A549 (cell line): ENCODE measurements at regions of chr16 and their contacts with region 1.

Region 1: GRCh38 chr16:14529010-14529669 is 100.9 kb downstream of the PARN start:
- DNase-seq: peak; percentile 73 to 97
- ATAC-seq: peak; percentile 79 to 92
- H3K4me3 ChIP-seq: no peak overlapping the region
- H3K27ac ChIP-seq: peak overlapping the region; percentile 91
- H3K4me1 ChIP-seq: peaks cover 70% of the 10 kb centered on the region
- CTCF ChIP-seq: peak; percentile 94
- EP300 ChIP-seq: peak; percentile 35 to 44; a peak in 2 of 5 replicates
- POLR2A ChIP-seq: peak; percentile 23; the same call in 1 of the 2 replicates
- RAD21 ChIP-seq: peak; percentile 99 to 100

Region 2: DNA sequence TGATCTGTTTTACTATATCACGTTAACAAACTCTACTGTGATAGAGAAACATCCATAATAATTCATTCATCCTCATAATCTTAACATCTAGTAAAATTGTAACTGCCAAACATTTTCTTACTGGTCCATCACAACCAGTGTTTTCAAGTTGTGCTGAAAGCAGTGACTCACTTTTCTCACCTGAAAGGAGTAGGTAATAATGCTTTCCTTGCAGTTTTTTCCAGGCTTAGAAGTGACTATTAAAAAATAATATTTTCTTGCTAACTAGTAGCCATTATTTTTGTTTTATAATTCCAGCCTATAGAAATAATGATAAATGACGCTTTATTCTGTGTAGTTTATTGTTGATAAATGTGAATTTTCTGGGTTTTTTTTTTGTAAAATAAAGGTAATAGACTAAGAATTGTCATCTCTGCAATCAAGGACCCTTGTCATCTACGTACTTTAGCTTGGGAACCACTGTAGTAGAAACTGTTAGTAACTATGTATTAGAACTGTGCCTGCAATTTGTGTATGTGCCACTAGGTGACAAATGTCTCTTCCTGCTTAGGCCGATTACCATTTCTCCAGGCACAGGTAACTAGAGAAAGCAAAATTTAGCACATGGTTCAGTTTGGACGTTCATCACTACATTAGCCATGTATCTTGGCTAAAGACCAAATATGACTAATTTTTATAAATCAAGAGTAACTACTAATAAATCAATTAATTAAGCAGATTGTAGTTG is 1018.6 kb before region 1 on chr16:
- CTCF ChIA-PET with region 1: no interaction called
- POLR2A ChIA-PET with region 1: no interaction called
- DNase-seq: no peak
- ATAC-seq: no peak
- H3K4me3 ChIP-seq: no peak overlapping the region
- H3K27ac ChIP-seq: no peak overlapping the region
- H3K4me1 ChIP-seq: no peaks in the 10 kb centered on the region
- CTCF ChIP-seq: no peak
- EP300 ChIP-seq: no peak
- POLR2A ChIP-seq: no peak
- RAD21 ChIP-seq: 0 out of 5 replicates have a peak, but pooled peaks of 1 of the 2 experiments have one; percentile 6

Region 3: GRCh38 chr16:14249291-14250032 is 279.7 kb before region 1 on chr16:
- CTCF ChIA-PET with region 1: interaction called, 29 read pairs
- POLR2A ChIA-PET with region 1: no interaction called
- DNase-seq: peak; percentile 36 to 46
- ATAC-seq: peak; percentile 60 to 61; a peak in 4 of 6 replicates
- H3K4me3 ChIP-seq: no peak overlapping the region
- H3K27ac ChIP-seq: peak overlapping the region; percentile 64 to 65
- H3K4me1 ChIP-seq: peaks cover 8% of the 10 kb centered on the region
- CTCF ChIP-seq: peak; percentile 97
- EP300 ChIP-seq: no peak
- POLR2A ChIP-seq: no peak
- RAD21 ChIP-seq: peak; percentile 89 to 93

Region 4: GRCh38 chr16:14310519-14310991 is 218.6 kb before region 1 on chr16:
- CTCF ChIA-PET with region 1: interaction called, 20 read pairs
- POLR2A ChIA-PET with region 1: interaction called, 3 read pairs
- DNase-seq: peak; percentile 56 to 63
- ATAC-seq: peak; percentile 37 to 49; a peak in 5 of 6 replicates
- H3K4me3 ChIP-seq: peak overlapping the region; percentile 98
- H3K27ac ChIP-seq: peak overlapping the region; percentile 99 to 100
- H3K4me1 ChIP-seq: peaks cover 95% of the 10 kb centered on the region
- CTCF ChIP-seq: peak; percentile 16; the same call in 1 of the 3 replicates
- EP300 ChIP-seq: no peak
- POLR2A ChIP-seq: no peak
- RAD21 ChIP-seq: 0 out of 5 replicates have a peak, but pooled peaks of 1 of the 2 experiments have one; percentile 12

Region 5: GRCh38 chr16:14354551-14355351 is 174.4 kb before region 1 on chr16:
- CTCF ChIA-PET with region 1: no interaction called
- POLR2A ChIA-PET with region 1: no interaction called
- DNase-seq: peak in 1 of 2 experiments; percentile 49
- ATAC-seq: no peak; a peak in 1 of 6 replicates
- H3K4me3 ChIP-seq: no peak overlapping the region
- H3K27ac ChIP-seq: peak overlapping the region; percentile 47 to 98; a peak in 5 of 6 replicates
- H3K4me1 ChIP-seq: peaks cover 30% of the 10 kb centered on the region
- CTCF ChIP-seq: no peak
- EP300 ChIP-seq: no peak
- POLR2A ChIP-seq: no peak
- RAD21 ChIP-seq: no peak

Region 6: GRCh38 chr16:14486520-14487303 is 42.4 kb before region 1 on chr16:
- CTCF ChIA-PET with region 1: interaction called, 15 read pairs
- POLR2A ChIA-PET with region 1: no interaction called
- DNase-seq: peak; percentile 93 to 94
- ATAC-seq: peak; percentile 89 to 92
- H3K4me3 ChIP-seq: peak overlapping the region; percentile 49
- H3K27ac ChIP-seq: peak overlapping the region; percentile 86 to 90
- H3K4me1 ChIP-seq: peaks cover 82% of the 10 kb centered on the region
- CTCF ChIP-seq: no peak
- EP300 ChIP-seq: peak in 1 of 2 experiments; percentile 46; a peak in 1 of 5 replicates
- POLR2A ChIP-seq: no peak
- RAD21 ChIP-seq: peak; percentile 20 to 40; a peak in 4 of 5 replicates

Region 7: GRCh38 chr16:14510939-14511799 is 18.0 kb before region 1 on chr16:
- CTCF ChIA-PET with region 1: interaction called, 72 read pairs
- POLR2A ChIA-PET with region 1: interaction called, 4 read pairs
- DNase-seq: peak in 1 of 2 experiments; percentile 69
- ATAC-seq: peak in 1 of 2 experiments; percentile 70; a peak in 3 of 6 replicates
- H3K4me3 ChIP-seq: no peak overlapping the region
- H3K27ac ChIP-seq: peak overlapping the region; percentile 94
- H3K4me1 ChIP-seq: peaks cover 59% of the 10 kb centered on the region
- CTCF ChIP-seq: no peak
- EP300 ChIP-seq: peak; percentile 29 to 46; a peak in 1 of 5 replicates
- POLR2A ChIP-seq: no peak
- RAD21 ChIP-seq: no peak